ENCODE measurements at regions of chr9 and their contacts with region 1.

Region 1: GRCh38 chr9:109463924-109464625 is 34.0 kb downstream of the PTPN3 start:
- DNase-seq: no peak
- H3K4me3 Mint-ChIP-seq: peak overlapping the region; percentile 31
- H3K27ac Mint-ChIP-seq: peak overlapping the region; percentile 93
- H3K4me1 Mint-ChIP-seq: peaks cover 68% of the 10 kb centered on the region
- H3K27me3 Mint-ChIP-seq: peaks cover 3% of the 10 kb centered on the region

Region 2: DNA sequence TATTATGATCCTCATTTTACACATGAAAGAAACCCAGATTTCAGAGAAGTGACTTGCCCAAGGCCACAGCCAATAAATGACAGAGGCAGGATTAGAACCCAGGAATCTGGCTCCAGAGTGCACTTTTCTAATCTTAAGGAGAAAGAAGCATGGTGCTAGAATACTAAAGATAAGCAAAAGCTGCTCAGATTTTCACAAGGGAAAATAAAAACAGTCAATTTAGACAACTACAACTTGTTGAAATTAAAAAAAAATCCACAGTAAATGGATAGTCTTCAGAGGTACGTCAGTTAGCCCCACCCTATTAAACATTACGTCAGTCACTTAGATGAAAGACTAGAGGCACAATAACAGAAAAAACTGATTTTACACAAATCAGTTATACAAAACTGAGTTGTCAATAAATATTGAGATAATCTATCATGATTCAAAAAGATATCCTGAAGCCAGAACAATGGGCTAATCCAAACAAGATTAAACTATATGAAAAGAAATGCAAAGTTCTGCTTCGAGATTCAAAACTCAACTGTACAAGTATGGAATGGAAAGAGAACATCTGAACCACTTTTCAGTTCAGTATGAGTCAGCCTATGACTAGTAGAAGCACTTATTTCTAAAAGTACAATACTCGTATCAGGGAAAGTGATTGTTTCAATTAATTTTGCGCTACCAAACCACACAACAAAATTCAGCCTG is 353.6 kb before region 1 on chr9:
- intact Hi-C with region 1: loop called (anchors 1 kb)
- DNase-seq: no peak
- H3K4me3 Mint-ChIP-seq: peak overlapping the region; percentile 54
- H3K27ac Mint-ChIP-seq: peak overlapping the region; percentile 79
- H3K4me1 Mint-ChIP-seq: peaks cover 62% of the 10 kb centered on the region
- H3K27me3 Mint-ChIP-seq: no peaks in the 10 kb centered on the region

Region 3: GRCh38 chr9:109440797-109441287 is 23.2 kb before region 1 on chr9:
- intact Hi-C with region 1: loop called (anchors 1 kb)
- DNase-seq: peak; percentile 60
- H3K4me3 Mint-ChIP-seq: no peak overlapping the region
- H3K27ac Mint-ChIP-seq: peak overlapping the region; percentile 80
- H3K4me1 Mint-ChIP-seq: peaks cover 29% of the 10 kb centered on the region
- H3K27me3 Mint-ChIP-seq: peaks cover 18% of the 10 kb centered on the region

Region 4: GRCh38 chr9:109447329-109448076 is 16.6 kb before region 1 on chr9:
- intact Hi-C with region 1: loop called (anchors 1 kb)
- DNase-seq: no peak
- H3K4me3 Mint-ChIP-seq: peak overlapping the region; percentile 10
- H3K27ac Mint-ChIP-seq: peak overlapping the region; percentile 83
- H3K4me1 Mint-ChIP-seq: peaks cover 37% of the 10 kb centered on the region
- H3K27me3 Mint-ChIP-seq: no peaks in the 10 kb centered on the region

Measured in activated T-helper 2 cell treated with anti-CD3 and anti-CD28 coated beads, Interferon-gamma antibody, Interleukin-2, Interleukin-4, amounts not matched to agents 10 μg/mL and 5 μg/mL and 100 μg/mL, durations not matched to agents 14 hours and 24 hours and 36 hours (primary cell).